Spleen (tissue), 13 donors: ENCODE measurements at regions of chr7 and their contacts with region 1.

Region 1: DNA sequence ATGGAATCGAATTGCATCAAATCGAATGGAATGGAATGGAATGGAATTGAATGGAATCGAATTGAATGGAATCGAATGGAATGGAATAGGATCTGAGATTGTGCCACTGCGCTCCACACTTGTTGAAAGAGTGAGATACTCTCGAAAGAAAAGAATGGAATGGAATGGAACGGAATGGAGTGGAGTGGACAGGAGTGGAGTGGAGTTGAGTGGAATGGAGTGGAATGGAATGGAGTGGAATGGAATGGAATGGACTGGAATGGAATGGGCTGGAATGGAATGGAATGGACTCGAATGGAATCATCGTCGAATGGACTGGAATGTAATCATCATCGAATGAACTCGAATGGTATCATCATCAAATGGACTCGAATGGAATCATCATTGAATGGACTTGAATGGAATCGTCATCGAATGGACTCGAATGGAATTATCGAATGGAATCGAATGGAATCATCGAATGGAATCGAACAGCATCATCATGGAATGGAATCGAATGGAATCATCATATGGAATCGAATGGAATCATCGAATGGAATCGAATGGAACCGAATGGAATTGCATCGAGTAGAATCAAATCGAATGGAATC is 38.1 kb downstream of the ZNF716 start:
- DNase-seq: no peak
- H3K4me3 ChIP-seq: no peak overlapping the region
- H3K27ac ChIP-seq: no peak overlapping the region
- H3K4me1 ChIP-seq: no peaks in the 10 kb centered on the region
- H3K27me3 ChIP-seq: no peaks in the 10 kb centered on the region
- CTCF ChIP-seq: no peak
- POLR2A ChIP-seq: no peak

Region 2: GRCh38 chr7:56449762-56450161 is 1038.3 kb before region 1 on chr7:
- intact Hi-C with region 1: no loop called
- DNase-seq: no peak
- H3K4me3 ChIP-seq: no peak overlapping the region
- H3K27ac ChIP-seq: no peak overlapping the region
- H3K4me1 ChIP-seq: no peaks in the 10 kb centered on the region
- H3K27me3 ChIP-seq: no peaks in the 10 kb centered on the region
- CTCF ChIP-seq: no peak
- POLR2A ChIP-seq: no peak

Region 3: GRCh38 chr7:56605146-56605545 is 882.9 kb before region 1 on chr7:
- intact Hi-C with region 1: no loop called
- DNase-seq: no peak
- H3K4me3 ChIP-seq: no peak overlapping the region
- H3K27ac ChIP-seq: no peak overlapping the region
- H3K4me1 ChIP-seq: no peaks in the 10 kb centered on the region
- H3K27me3 ChIP-seq: no peaks in the 10 kb centered on the region
- CTCF ChIP-seq: no peak
- POLR2A ChIP-seq: no peak

Region 4: DNA sequence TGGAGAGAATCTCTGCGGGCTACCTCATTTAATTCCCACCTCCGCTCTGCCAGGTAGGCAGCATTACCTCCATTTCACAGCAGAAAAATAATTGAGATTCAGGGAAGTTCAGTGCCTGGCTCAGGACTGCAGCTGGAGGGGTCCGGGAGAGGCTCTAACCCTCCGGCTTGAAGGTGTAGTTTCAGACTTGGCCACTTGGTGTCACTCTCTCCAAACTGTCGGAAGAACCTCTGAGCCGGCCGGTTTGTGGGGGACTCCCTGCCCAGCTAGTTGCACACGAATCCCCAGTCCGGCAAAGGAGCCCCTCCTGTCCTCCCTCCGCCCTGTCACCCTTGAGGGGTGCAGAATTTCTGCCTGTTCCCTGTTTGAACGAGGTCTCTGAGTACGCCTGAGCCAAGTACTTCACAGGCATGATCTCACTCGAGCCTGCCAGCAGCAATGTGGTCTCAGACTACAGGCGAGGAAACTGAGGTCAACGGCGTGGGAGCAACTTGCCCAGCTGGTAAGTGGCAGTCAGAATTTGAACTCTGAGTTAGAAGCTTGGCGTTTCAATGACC is 182.8 kb before region 1 on chr7:
- intact Hi-C with region 1: loop called (anchors 5 kb)
- DNase-seq: peak; percentile 22
- H3K4me3 ChIP-seq: no peak overlapping the region
- H3K27ac ChIP-seq: no peak overlapping the region
- H3K4me1 ChIP-seq: no peaks in the 10 kb centered on the region
- H3K27me3 ChIP-seq: no peaks in the 10 kb centered on the region
- CTCF ChIP-seq: peak in 8 of 11 experiments; percentile 11 to 60 (median 36)
- POLR2A ChIP-seq: no peak

Region 5: GRCh38 chr7:57646901-57647246 is 158.8 kb after region 1 on chr7:
- intact Hi-C with region 1: no loop called
- DNase-seq: no peak
- H3K4me3 ChIP-seq: no peak overlapping the region
- H3K27ac ChIP-seq: no peak overlapping the region
- H3K4me1 ChIP-seq: no peaks in the 10 kb centered on the region
- H3K27me3 ChIP-seq: no peaks in the 10 kb centered on the region
- CTCF ChIP-seq: no peak
- POLR2A ChIP-seq: no peak